ENCODE measurements at regions of chr9 and their contacts with region 1.

Region 1: GRCh38 chr9:20622330-20623020 is at the start of gene MLLT3:
- DNase-seq: peak; percentile 87
- ATAC-seq: peak; percentile 88
- H3K4me3 Mint-ChIP-seq: peak within 1 kb of the TSS; percentile 92
- H3K27ac Mint-ChIP-seq: peak within 1 kb of the TSS; percentile 80
- H3K4me1 Mint-ChIP-seq: peaks cover 37% of the 10 kb centered on the region
- H3K27me3 Mint-ChIP-seq: peaks cover 17% of the 10 kb centered on the region
- CTCF ChIP-seq: no peak
- total RNA-seq, gene MLLT3: 1.4 and 1.5 TPM in 2 replicates

Region 2: GRCh38 chr9:19230356-19231125 is 1391.9 kb before region 1 on chr9 and contains the start of gene DENND4C:
- CTCF ChIA-PET with region 1: no interaction called
- POLR2A ChIA-PET with region 1: no interaction called
- intact Hi-C with region 1: loop called (anchors 5 kb)
- DNase-seq: peak; percentile 76
- ATAC-seq: peak; percentile 72
- H3K4me3 Mint-ChIP-seq: no peak within 1 kb of the TSS
- H3K27ac Mint-ChIP-seq: peak within 1 kb of the TSS; percentile 81
- H3K4me1 Mint-ChIP-seq: peaks cover 10% of the 10 kb centered on the region
- H3K27me3 Mint-ChIP-seq: no peaks in the 10 kb centered on the region
- CTCF ChIP-seq: no peak
- total RNA-seq, gene DENND4C: 27.1 and 33.4 TPM in 2 replicates

Region 3: GRCh38 chr9:20356403-20357035 is 266.0 kb before region 1 on chr9:
- CTCF ChIA-PET with region 1: no interaction called
- POLR2A ChIA-PET with region 1: no interaction called
- intact Hi-C with region 1: loop called (anchors 1 kb)
- DNase-seq: no peak
- ATAC-seq: no peak
- H3K4me3 Mint-ChIP-seq: no peak overlapping the region
- H3K27ac Mint-ChIP-seq: no peak overlapping the region
- H3K4me1 Mint-ChIP-seq: no peaks in the 10 kb centered on the region
- H3K27me3 Mint-ChIP-seq: peaks cover 2% of the 10 kb centered on the region
- CTCF ChIP-seq: no peak

Region 4: DNA sequence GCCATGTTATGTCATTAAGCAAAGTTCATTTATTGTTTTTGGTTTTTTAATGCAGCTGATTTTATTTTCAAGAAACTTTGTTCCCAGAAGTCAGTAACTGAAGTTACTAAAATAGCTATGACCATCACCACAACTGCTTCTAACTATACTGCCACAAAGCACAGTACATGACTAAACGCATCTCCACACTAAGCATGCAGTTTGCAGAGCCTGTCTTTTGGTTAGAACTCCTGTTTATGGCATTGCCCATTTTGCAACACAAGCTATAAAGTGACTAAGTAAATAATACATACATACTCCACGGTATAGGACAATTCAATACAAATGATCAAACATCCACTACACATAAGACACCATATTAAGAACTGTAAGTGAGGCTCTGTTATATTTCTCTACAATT is 109.8 kb before region 1 on chr9:
- CTCF ChIA-PET with region 1: no interaction called
- POLR2A ChIA-PET with region 1: no interaction called
- intact Hi-C with region 1: no loop called
- DNase-seq: no peak
- ATAC-seq: no peak
- H3K4me3 Mint-ChIP-seq: no peak overlapping the region
- H3K27ac Mint-ChIP-seq: no peak overlapping the region
- H3K4me1 Mint-ChIP-seq: peaks cover 9% of the 10 kb centered on the region
- H3K27me3 Mint-ChIP-seq: no peaks in the 10 kb centered on the region
- CTCF ChIP-seq: no peak

Region 5: GRCh38 chr9:20640331-20641187 is 18.1 kb after region 1 on chr9:
- CTCF ChIA-PET with region 1: interaction called, 12 read pairs
- POLR2A ChIA-PET with region 1: interaction called, 4 read pairs
- intact Hi-C with region 1: loop called (anchors 2 kb)
- DNase-seq: peak; percentile 34
- ATAC-seq: peak; percentile 93
- H3K4me3 Mint-ChIP-seq: no peak overlapping the region
- H3K27ac Mint-ChIP-seq: no peak overlapping the region
- H3K4me1 Mint-ChIP-seq: peaks cover 9% of the 10 kb centered on the region
- H3K27me3 Mint-ChIP-seq: peaks cover 47% of the 10 kb centered on the region
- CTCF ChIP-seq: no peak

Region 6: GRCh38 chr9:20670395-20670794 is 47.9 kb after region 1 on chr9:
- CTCF ChIA-PET with region 1: no interaction called
- POLR2A ChIA-PET with region 1: no interaction called
- intact Hi-C with region 1: no loop called
- DNase-seq: no peak
- ATAC-seq: no peak
- H3K4me3 Mint-ChIP-seq: no peak overlapping the region
- H3K27ac Mint-ChIP-seq: no peak overlapping the region
- H3K4me1 Mint-ChIP-seq: no peaks in the 10 kb centered on the region
- H3K27me3 Mint-ChIP-seq: peaks cover 4% of the 10 kb centered on the region
- CTCF ChIP-seq: no peak

Region 7: GRCh38 chr9:20771729-20772128 is 149.3 kb after region 1 on chr9:
- CTCF ChIA-PET with region 1: no interaction called
- POLR2A ChIA-PET with region 1: no interaction called
- intact Hi-C with region 1: no loop called
- DNase-seq: no peak
- ATAC-seq: no peak
- H3K4me3 Mint-ChIP-seq: no peak overlapping the region
- H3K27ac Mint-ChIP-seq: no peak overlapping the region
- H3K4me1 Mint-ChIP-seq: no peaks in the 10 kb centered on the region
- H3K27me3 Mint-ChIP-seq: no peaks in the 10 kb centered on the region
- CTCF ChIP-seq: no peak

Region 8: DNA sequence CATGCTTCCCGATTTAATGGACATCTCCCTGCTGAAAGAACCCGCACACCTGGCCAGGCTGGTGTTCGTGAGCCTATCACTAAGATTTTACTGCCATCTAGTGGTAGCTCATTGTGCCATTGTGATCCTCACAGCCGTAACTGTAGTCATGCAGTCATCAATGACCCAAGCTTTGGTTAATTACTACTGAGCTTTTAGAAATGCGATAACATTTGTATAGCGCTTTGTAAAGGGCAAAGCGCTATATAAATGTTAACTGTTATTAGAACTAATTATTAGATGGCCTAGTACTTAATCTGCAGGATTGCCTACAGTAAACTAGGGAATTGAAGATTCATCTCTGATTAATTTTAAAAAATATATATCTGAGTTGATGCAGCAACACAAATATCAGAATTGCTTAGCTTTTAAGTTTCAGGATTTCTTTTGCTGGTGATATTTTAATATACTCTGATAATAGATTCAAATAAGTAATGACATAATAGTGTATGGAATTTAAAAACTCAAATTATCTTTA is 318.8 kb after region 1 on chr9:
- CTCF ChIA-PET with region 1: interaction called, 41 read pairs
- POLR2A ChIA-PET with region 1: no interaction called
- intact Hi-C with region 1: loop called (anchors 1 kb)
- DNase-seq: no peak
- ATAC-seq: peak; percentile 75
- H3K4me3 Mint-ChIP-seq: no peak overlapping the region
- H3K27ac Mint-ChIP-seq: no peak overlapping the region
- H3K4me1 Mint-ChIP-seq: peaks cover 3% of the 10 kb centered on the region
- H3K27me3 Mint-ChIP-seq: no peaks in the 10 kb centered on the region
- CTCF ChIP-seq: peak; percentile 90

Region 9: GRCh38 chr9:21381448-21382339 is 759.2 kb after region 1 on chr9:
- CTCF ChIA-PET with region 1: no interaction called
- POLR2A ChIA-PET with region 1: no interaction called
- intact Hi-C with region 1: loop called (anchors 1 kb)
- DNase-seq: peak; percentile 54
- ATAC-seq: peak; percentile 99
- H3K4me3 Mint-ChIP-seq: no peak overlapping the region
- H3K27ac Mint-ChIP-seq: peak overlapping the region; percentile 41
- H3K4me1 Mint-ChIP-seq: peaks cover 25% of the 10 kb centered on the region
- H3K27me3 Mint-ChIP-seq: peaks cover 16% of the 10 kb centered on the region
- CTCF ChIP-seq: no peak